Left lung (tissue), 14 donors: ENCODE measurements at regions of chr19 and their contacts with region 1.

Region 1: GRCh38 chr19:56725829-56726424 is 54.4 kb upstream of the ZNF835 start:
- DNase-seq: peak in 1 of 4 donors; percentile 27
- ATAC-seq: no peak
- H3K4me3 ChIP-seq: no peak overlapping the region
- H3K27ac ChIP-seq: no peak overlapping the region
- H3K4me1 ChIP-seq: no peaks in the 10 kb centered on the region
- H3K27me3 ChIP-seq: no peaks in the 10 kb centered on the region
- CTCF ChIP-seq: peak in 1 of 2 donors; percentile 13

Region 2: GRCh38 chr19:57099199-57099661 is 373.3 kb after region 1 on chr19:
- intact Hi-C with region 1: loop called in 1 of 2 experiments (anchors 10 kb)
- DNase-seq: peak; percentile 44 to 90 (median 68)
- ATAC-seq: peak; percentile 87
- H3K4me3 ChIP-seq: no peak overlapping the region
- H3K27ac ChIP-seq: no peak overlapping the region
- H3K4me1 ChIP-seq: peaks cover 0 to 3% of the 10 kb centered on the region in 2 donors
- H3K27me3 ChIP-seq: peaks cover 0 to 23% of the 10 kb centered on the region in 2 donors
- CTCF ChIP-seq: peak; percentile 86 to 90